ENCODE measurements at regions of chr10 and their contacts with region 1.

Region 1: DNA sequence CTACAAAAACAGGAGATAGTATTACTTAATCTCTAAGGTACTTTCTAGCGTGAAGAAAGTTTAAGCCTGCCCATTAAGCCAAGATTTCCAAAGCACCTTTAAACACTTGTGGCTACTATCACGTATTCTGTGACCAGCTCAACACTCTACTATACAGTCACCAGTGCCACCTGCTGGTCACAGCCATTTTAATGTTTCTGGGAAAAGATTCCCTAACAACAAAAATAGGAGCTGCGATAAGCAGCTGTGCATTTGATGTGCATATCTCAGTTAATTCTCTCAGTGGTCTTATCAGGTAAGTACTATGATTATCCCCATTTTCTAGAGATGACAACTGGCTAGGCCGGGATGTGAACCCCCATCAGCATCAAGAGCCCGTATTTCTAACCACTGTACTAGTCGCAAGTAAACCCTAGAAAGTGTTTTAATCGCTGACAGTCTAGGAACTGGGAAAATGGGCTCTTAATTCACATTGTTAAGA is 860 bp downstream of the SEC31B start:
- DNase-seq: peak; percentile 79 to 85
- H3K4me3 ChIP-seq: peak overlapping the region; percentile 50 to 59 (median 55)
- H3K27ac ChIP-seq: peak overlapping the region in 2 of 5 donors; percentile 0 to 62
- H3K4me1 ChIP-seq: peaks cover 13 to 21% (median 16%) of the 10 kb centered on the region in 4 donors
- H3K27me3 ChIP-seq: peaks cover 0 to 9% (median 9%) of the 10 kb centered on the region in 3 donors
- CTCF ChIP-seq: peak in 5 of 7 experiments; percentile 49 to 80 (median 65)
- EP300 ChIP-seq: no peak
- POLR2A ChIP-seq: no peak

Region 2: DNA sequence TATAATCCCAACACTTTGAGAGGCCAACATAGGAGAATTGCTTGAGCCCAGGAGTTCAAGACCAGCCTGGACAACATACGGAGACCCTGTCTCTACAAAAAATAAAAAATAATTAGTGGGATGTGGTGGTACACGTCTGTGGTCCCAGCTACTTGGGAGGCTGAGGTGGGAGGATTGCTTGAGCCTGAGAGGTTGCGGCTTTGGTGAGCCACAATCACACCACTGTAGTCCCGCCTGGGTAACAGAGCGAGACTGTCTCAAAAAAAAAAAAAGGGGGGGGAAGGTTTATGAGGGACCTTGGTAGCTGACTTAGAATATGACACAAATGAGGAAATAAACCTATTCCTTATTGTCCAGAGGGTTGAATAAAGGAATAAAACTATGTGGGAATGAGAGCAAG is 141.0 kb before region 1 on chr10:
- intact Hi-C with region 1: no loop called
- DNase-seq: no peak
- H3K4me3 ChIP-seq: no peak overlapping the region
- H3K27ac ChIP-seq: no peak overlapping the region
- H3K4me1 ChIP-seq: peaks cover 17 to 35% (median 26%) of the 10 kb centered on the region in 4 donors
- H3K27me3 ChIP-seq: no peaks in the 10 kb centered on the region
- CTCF ChIP-seq: no peak
- EP300 ChIP-seq: no peak
- POLR2A ChIP-seq: no peak

Region 3: GRCh38 chr10:100433253-100434240 is 85.3 kb before region 1 on chr10:
- intact Hi-C with region 1: loop called (anchors 10 kb)
- DNase-seq: peak; percentile 96 to 98
- H3K4me3 ChIP-seq: no peak overlapping the region
- H3K27ac ChIP-seq: no peak overlapping the region
- H3K4me1 ChIP-seq: no peaks in the 10 kb centered on the region
- H3K27me3 ChIP-seq: no peaks in the 10 kb centered on the region
- CTCF ChIP-seq: peak in 6 of 7 experiments; percentile 97 to 100 (median 99)
- EP300 ChIP-seq: no peak
- POLR2A ChIP-seq: no peak

Region 4: DNA sequence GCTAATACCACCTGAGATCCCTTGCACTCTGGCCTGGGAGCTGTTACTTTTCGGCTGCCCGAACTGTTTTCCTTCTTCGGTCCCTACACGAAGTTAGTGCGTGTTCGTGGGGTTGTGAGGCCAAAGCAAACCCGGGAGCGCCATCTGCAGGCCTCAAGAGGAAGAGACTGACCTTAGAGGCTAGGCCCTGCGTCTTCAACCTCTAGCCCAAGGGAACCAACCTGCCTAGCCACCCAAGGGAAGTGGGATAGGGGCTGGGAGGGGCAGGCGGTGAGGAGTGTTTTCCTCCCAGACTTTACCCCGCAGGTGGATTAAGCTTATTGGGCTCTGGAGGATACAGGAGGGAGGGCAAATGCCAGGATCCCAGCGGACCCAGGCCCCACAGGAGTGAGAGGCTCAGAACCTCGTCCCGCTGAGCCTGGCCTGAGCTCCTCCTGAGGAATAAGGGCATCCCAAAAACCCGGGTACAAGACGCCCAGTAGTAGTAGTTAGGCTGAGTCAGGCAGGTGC is 224.9 kb after region 1 on chr10:
- intact Hi-C with region 1: no loop called
- DNase-seq: peak; percentile 52 to 84
- H3K4me3 ChIP-seq: peak overlapping the region in 1 of 4 donors; percentile 51
- H3K27ac ChIP-seq: no peak overlapping the region
- H3K4me1 ChIP-seq: peaks cover 54 to 87% (median 67%) of the 10 kb centered on the region in 4 donors
- H3K27me3 ChIP-seq: peaks cover 60 to 100% (median 100%) of the 10 kb centered on the region in 3 donors
- CTCF ChIP-seq: peak in 4 of 7 experiments; percentile 36 to 51 (median 38)
- EP300 ChIP-seq: no peak
- POLR2A ChIP-seq: no peak

Measured in stomach (tissue), 19 donors.